ENCODE measurements at regions of chr9 and their contacts with region 1.

Region 1: GRCh38 chr9:132780230-132781007 is 97.7 kb downstream of the AK8 start:
- DNase-seq: no peak
- H3K4me3 Mint-ChIP-seq: peak overlapping the region; percentile 23
- H3K27ac Mint-ChIP-seq: peak overlapping the region; percentile 71
- H3K4me1 Mint-ChIP-seq: peaks cover 17% of the 10 kb centered on the region
- H3K27me3 Mint-ChIP-seq: peaks cover 12% of the 10 kb centered on the region

Region 2: DNA sequence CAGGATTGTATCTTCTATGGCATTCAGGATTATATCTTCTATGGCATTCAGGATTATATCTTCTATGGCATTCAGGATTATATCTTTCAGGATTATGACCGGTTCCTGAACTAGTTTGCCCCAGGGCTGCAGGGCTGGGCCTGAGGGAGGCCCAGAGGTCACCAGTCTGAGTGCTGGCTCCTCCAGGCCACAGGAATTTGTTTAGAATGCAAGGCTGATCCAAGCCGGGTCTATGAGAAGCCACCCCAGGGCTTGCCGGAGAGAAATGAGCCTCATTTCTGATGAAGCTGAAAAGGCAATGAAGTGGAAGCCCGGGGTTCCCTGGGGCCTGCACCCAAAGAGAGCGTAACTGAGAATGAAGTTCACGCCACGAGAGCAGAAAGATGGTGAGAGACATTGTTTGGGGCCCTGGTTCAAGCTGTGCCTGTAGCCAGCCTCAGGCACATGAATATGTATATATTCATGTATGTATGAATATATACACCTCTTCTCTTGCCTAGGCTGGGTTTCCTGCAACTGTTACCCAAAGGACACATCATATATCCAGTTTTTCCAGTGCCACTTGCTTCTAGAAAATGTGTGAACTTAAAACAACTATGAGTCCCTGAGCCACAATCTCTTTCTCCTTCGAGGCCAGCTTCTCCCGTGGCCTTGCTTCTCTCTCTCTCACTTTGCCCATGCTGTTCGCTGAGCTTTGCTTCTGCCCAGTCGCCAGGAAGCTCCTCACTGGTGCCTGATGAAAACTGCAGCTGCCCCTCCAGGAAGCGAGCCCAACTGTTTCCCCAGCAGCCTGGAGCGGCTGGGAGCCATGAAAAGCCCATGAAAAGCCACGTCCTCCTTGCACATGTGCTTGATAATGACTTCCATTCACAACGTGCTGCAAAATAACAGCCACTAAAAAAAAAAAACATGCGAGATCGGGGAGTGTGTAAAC is 47.8 kb before region 1 on chr9:
- intact Hi-C with region 1: no loop called
- DNase-seq: no peak
- H3K4me3 Mint-ChIP-seq: no peak overlapping the region
- H3K27ac Mint-ChIP-seq: no peak overlapping the region
- H3K4me1 Mint-ChIP-seq: no peaks in the 10 kb centered on the region
- H3K27me3 Mint-ChIP-seq: peaks cover 4% of the 10 kb centered on the region

Region 3: GRCh38 chr9:132768932-132769905 is 11.2 kb before region 1 on chr9:
- intact Hi-C with region 1: loop called (anchors 1 kb)
- DNase-seq: peak; percentile 35
- H3K4me3 Mint-ChIP-seq: peak overlapping the region; percentile 93
- H3K27ac Mint-ChIP-seq: peak overlapping the region; percentile 97
- H3K4me1 Mint-ChIP-seq: peaks cover 18% of the 10 kb centered on the region
- H3K27me3 Mint-ChIP-seq: peaks cover 13% of the 10 kb centered on the region

Region 4: GRCh38 chr9:132814937-132815336 is 34.5 kb after region 1 on chr9:
- intact Hi-C with region 1: loop called (anchors 2 kb)
- DNase-seq: no peak
- H3K4me3 Mint-ChIP-seq: no peak overlapping the region
- H3K27ac Mint-ChIP-seq: no peak overlapping the region
- H3K4me1 Mint-ChIP-seq: no peaks in the 10 kb centered on the region
- H3K27me3 Mint-ChIP-seq: peaks cover 32% of the 10 kb centered on the region

Region 5: GRCh38 chr9:133437753-133438531 is 657.5 kb after region 1 on chr9:
- intact Hi-C with region 1: no loop called
- DNase-seq: no peak
- H3K4me3 Mint-ChIP-seq: no peak overlapping the region
- H3K27ac Mint-ChIP-seq: no peak overlapping the region
- H3K4me1 Mint-ChIP-seq: no peaks in the 10 kb centered on the region
- H3K27me3 Mint-ChIP-seq: peaks cover 1% of the 10 kb centered on the region